AG04449 (cell line): ENCODE measurements at regions of chr7 and their contacts with region 1.

Region 1: DNA sequence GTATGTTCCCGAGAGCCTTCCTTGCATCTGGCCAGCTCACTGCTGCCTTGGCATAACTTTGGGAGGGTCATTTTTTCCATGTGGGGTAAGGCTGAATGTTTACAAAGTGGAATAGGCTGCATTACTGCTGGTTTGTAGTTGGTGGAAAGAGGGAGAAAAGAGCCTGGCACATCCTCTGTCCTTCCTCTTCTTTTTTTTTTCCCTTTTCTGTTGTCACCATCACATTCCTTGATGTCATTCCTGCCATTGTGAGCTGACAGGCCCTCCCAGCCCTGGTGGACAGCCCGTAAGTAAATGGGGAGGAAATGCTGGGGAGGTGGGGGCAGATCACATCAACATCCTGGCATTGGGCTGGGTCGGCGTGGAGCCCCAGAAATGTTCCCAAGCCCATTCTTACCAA is at the start of gene GARIN1A:
- DNase-seq: no peak
- H3K4me3 ChIP-seq: no peak within 1 kb of the TSS
- CTCF ChIP-seq: no peak

Region 2: DNA sequence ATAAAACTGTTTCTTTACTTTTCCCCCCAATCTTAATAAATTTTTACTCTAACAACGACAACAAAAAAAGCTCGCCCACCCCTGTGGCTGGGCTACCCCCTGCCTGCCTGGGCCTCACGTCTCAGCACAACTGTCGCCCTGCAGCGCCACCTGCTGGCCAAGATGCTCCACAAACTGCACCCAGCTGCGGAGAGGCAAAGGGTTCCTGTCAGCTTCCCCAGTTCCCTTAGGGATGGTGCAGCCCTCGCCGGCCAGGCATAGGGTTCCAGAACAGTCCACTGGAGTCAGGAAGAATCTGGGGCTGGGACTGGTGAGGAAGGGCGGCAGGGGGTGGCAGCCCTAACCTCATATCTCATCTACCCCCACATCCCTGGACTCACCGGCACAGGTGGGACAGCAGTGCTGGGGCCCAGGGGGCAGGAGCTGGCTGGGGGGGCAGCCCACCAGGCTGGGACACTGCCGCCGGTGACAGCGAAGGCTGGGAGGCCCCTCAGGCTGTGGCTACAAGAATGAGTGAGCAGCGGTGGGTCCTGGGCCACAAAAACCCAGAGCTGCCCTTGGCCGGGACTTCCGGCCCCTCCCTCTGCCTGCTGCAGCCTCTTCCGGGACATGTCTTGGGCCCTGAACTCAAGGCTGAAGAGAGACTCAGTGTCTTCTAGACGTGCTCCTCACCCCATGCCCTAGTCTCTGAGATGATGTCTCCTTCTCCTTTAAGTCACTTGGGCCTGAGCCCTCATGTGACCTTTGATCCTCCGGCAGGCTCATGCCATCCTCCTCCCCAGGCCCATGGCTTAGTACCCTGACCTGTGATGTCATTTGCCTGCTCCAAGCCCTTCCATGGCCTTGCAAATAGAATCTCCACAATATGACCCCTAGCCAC is 211.9 kb after region 1 on chr7:
- CTCF ChIA-PET with region 1: interaction called, 10 read pairs
- POLR2A ChIA-PET with region 1: no interaction called
- DNase-seq: no peak
- H3K4me3 ChIP-seq: no peak overlapping the region
- CTCF ChIP-seq: peak; percentile 97